Left cardiac atrium (tissue), 4 donors: ENCODE measurements at regions of chr9 and their contacts with region 1.

Region 1: GRCh38 chr9:72592502-72593403 is 71.3 kb downstream of the TMC1 start:
- DNase-seq: no peak
- ATAC-seq: peak; percentile 74 to 87

Region 2: GRCh38 chr9:72292256-72292682 is 300.5 kb before region 1 on chr9:
- intact Hi-C with region 1: loop called (anchors 2 to 5 kb)
- DNase-seq: no peak
- ATAC-seq: peak; percentile 50 to 66

Region 3: DNA sequence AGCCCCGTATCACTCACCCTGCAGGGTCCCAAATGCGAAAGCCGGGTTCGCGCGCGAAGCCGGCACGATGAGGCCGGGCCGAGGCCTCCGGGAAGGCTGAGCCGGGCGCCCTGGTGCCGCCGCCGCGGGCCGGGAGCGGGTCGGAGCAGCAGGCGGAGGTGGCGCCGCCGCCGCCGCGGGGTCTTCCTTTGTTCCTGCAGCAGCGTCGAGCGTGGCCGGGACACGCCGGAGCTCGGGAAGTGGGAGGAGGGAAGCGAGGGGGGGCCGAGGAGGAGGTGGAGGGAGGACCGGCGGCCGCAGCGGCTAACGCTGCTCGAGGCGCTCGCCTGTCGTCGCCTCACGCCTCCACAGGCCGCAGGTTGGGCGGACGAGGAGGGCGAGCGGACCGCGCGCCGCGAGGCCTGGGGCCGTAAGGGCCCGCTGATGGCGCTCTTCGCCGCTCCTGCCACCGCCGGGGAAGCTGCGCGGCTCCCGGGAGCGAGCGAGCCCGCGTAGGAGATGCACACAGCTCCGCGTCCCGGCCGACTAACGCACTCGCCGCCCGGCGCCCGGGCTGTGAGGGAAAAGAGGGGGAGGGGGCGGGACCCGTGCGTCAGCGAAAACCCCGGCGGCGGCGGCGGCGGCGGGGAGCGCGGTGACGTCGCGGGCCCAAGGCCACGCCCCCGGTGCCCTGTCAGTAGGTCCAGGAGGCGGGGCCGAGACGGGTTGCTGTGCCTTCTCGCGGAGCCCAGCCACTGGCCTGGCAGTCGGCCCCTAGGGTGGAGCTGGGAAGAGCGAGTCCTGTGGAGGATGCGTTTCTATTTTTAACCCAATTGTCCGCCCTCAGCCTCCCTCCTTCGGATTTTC is 227.9 kb before region 1 on chr9 and contains the start of gene ZFAND5:
- intact Hi-C with region 1: loop called in 1 of 2 experiments (anchors 5 kb)
- DNase-seq: peak; percentile 100
- ATAC-seq: peak; percentile 93 to 97
- total RNA-seq, gene ZFAND5: 151 to 176 TPM

Region 4: GRCh38 chr9:72541676-72542289 is 51.0 kb before region 1 on chr9:
- intact Hi-C with region 1: no loop called
- DNase-seq: no peak
- ATAC-seq: no peak

Region 5: DNA sequence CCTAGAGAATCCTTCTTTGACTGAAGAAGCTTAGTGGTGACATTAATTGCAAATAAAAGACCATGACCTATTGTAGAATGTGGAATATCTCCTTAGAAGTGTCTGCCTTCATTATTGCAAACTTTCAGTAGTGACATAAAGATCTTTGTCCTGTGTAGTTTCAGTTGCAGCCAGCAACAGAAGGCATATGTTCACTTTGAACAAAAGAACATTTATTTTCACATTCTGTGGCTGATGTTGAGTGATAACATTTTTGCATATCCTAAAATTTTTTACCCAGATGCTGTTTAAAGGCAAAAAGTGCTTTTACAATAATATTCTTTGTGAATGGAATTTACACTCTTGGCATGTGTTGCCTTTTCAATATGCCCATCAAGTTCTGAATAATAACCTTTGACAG is 94.6 kb after region 1 on chr9:
- intact Hi-C with region 1: no loop called
- DNase-seq: no peak
- ATAC-seq: no peak